ENCODE measurements at regions of chr5 and their contacts with region 1.

Region 1: GRCh38 chr5:40755407-40756365 is at the start of gene TTC33:
- DNase-seq: peak; percentile 98
- H3K4me3 Mint-ChIP-seq: no peak within 1 kb of the TSS
- H3K27ac Mint-ChIP-seq: no peak within 1 kb of the TSS
- H3K4me1 Mint-ChIP-seq: peaks cover 10% of the 10 kb centered on the region
- H3K27me3 Mint-ChIP-seq: no peaks in the 10 kb centered on the region
- total RNA-seq, gene TTC33: 24.4 to 27.4 TPM

Region 2: GRCh38 chr5:40716000-40716399 is 39.7 kb before region 1 on chr5:
- CTCF ChIA-PET with region 1: no interaction called
- intact Hi-C with region 1: loop called (anchors 1 kb)
- DNase-seq: no peak
- H3K4me3 Mint-ChIP-seq: no peak overlapping the region
- H3K27ac Mint-ChIP-seq: no peak overlapping the region
- H3K4me1 Mint-ChIP-seq: peaks cover 13% of the 10 kb centered on the region
- H3K27me3 Mint-ChIP-seq: no peaks in the 10 kb centered on the region

Region 3: GRCh38 chr5:40798012-40798855 is 42.5 kb after region 1 on chr5 and contains the start of gene PRKAA1:
- CTCF ChIA-PET with region 1: no interaction called
- intact Hi-C with region 1: loop called (anchors 1 kb)
- DNase-seq: peak; percentile 85
- H3K4me3 Mint-ChIP-seq: peak within 1 kb of the TSS; percentile 88
- H3K27ac Mint-ChIP-seq: peak within 1 kb of the TSS; percentile 85
- H3K4me1 Mint-ChIP-seq: peaks cover 41% of the 10 kb centered on the region
- H3K27me3 Mint-ChIP-seq: peaks cover 2% of the 10 kb centered on the region
- total RNA-seq, gene PRKAA1: 52.6 to 58.6 TPM

Region 4: GRCh38 chr5:40928886-40929448 is 173.3 kb after region 1 on chr5:
- CTCF ChIA-PET with region 1: no interaction called
- intact Hi-C with region 1: no loop called
- DNase-seq: no peak
- H3K4me3 Mint-ChIP-seq: no peak overlapping the region
- H3K27ac Mint-ChIP-seq: no peak overlapping the region
- H3K4me1 Mint-ChIP-seq: no peaks in the 10 kb centered on the region
- H3K27me3 Mint-ChIP-seq: no peaks in the 10 kb centered on the region

Region 5: GRCh38 chr5:41748631-41749030 is 992.9 kb after region 1 on chr5:
- CTCF ChIA-PET with region 1: no interaction called
- intact Hi-C with region 1: loop called (anchors 2 kb)
- DNase-seq: peak; percentile 63
- H3K4me3 Mint-ChIP-seq: no peak overlapping the region
- H3K27ac Mint-ChIP-seq: no peak overlapping the region
- H3K4me1 Mint-ChIP-seq: peaks cover 34% of the 10 kb centered on the region
- H3K27me3 Mint-ChIP-seq: no peaks in the 10 kb centered on the region

Region 6: DNA sequence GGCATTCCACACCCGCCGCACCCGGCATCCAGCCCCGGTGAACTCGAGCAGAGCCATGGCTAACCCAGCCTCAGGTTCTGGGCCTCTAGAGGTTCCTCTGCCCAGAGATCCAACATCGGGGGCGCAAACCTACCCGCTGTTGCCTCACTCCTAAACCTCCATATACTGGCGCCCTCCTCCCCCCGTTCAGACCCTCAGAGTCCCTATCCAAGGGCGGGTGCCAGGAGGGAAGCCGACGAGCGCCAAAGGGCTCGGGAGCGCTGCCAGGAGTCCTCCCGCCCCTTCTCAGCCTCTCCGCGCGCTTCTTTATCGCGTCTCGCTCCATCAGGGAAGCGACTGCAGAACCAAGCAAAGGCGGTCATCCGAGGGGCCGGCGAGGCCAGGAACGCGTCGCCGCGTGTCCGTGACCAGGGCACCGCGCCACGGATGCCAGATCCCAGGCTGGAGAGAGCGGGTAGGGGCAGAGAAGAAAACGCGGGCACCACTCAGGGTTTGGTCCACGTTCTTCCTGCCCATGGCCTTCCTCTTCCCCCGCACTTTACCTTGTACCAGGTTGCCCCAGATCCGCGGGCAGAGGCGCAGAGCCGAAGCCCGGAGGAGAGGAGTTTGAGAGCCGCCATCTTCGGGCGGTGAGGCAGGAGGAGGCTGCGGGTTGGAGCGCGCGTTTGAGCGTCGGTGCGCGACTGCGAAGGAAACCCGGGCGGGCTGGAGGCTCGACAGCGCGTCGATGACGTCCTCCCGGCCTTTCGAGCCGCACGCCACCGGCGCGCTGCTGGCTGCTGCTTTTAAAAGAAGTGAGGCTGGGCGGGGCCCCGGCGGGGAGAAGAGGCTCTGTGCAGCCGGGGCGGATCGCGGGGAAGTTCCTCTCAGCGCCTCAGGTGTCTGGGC is 1114.3 kb after region 1 on chr5 and contains the start of gene OXCT1:
- CTCF ChIA-PET with region 1: no interaction called
- intact Hi-C with region 1: loop called (anchors 5 kb)
- DNase-seq: peak; percentile 93
- H3K4me3 Mint-ChIP-seq: peak within 1 kb of the TSS; percentile 92
- H3K27ac Mint-ChIP-seq: peak within 1 kb of the TSS; percentile 88
- H3K4me1 Mint-ChIP-seq: peaks cover 53% of the 10 kb centered on the region
- H3K27me3 Mint-ChIP-seq: no peaks in the 10 kb centered on the region
- total RNA-seq, gene OXCT1: 76.1 to 78.8 TPM